OCI-LY7 (cell line): ENCODE measurements at regions of chr1 and their contacts with region 1.

Region 1: DNA sequence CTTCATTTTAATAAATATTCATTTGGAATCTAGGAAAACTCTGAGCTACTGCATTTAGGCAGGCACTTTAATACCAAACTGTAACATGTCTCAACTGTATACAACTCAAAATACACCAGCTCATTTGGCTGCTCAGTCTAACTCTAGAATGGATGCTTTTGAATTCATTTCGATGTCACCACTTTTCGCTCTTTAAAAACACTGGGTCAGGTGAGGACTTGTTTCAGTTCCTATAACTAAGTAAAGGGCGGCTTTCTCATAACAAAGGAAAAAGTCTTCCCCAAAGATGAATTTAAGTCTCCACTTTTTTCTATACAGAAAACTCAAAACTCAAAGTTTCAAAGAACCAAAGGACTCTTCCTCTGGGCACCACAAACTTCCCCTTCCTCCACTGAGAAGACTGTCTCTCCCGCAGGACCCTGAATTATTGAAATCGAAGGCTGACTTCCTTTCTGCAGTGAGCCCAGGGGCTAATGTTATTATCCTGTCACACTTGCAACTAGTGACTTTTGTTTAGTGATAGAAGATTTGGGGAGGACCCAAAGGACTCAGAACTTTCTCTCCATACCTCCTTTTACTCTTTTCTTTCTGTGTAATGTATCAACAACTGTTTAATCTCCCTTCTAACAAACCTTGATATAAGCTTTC is 9.7 kb upstream of the DHX9 start:
- DNase-seq: peak; percentile 72
- H3K4me3 ChIP-seq: peak overlapping the region; percentile 56
- H3K27ac ChIP-seq: peak overlapping the region; percentile 53
- H3K4me1 ChIP-seq: peaks cover 23% of the 10 kb centered on the region
- CTCF ChIP-seq: no peak

Region 2: GRCh38 chr1:182839209-182840065 is 10.0 kb after region 1 on chr1 and contains the start of gene DHX9:
- CTCF ChIA-PET with region 1: no interaction called
- POLR2A ChIA-PET with region 1: interaction called, 14 read pairs
- intact Hi-C with region 1: no loop called
- DNase-seq: peak; percentile 95
- H3K4me3 ChIP-seq: peak within 1 kb of the TSS; percentile 98
- H3K27ac ChIP-seq: peak within 1 kb of the TSS; percentile 87
- H3K4me1 ChIP-seq: peaks cover 35% of the 10 kb centered on the region
- CTCF ChIP-seq: peak; percentile 55
- total RNA-seq, gene DHX9: 217 and 276 TPM in 2 replicates

Region 3: DNA sequence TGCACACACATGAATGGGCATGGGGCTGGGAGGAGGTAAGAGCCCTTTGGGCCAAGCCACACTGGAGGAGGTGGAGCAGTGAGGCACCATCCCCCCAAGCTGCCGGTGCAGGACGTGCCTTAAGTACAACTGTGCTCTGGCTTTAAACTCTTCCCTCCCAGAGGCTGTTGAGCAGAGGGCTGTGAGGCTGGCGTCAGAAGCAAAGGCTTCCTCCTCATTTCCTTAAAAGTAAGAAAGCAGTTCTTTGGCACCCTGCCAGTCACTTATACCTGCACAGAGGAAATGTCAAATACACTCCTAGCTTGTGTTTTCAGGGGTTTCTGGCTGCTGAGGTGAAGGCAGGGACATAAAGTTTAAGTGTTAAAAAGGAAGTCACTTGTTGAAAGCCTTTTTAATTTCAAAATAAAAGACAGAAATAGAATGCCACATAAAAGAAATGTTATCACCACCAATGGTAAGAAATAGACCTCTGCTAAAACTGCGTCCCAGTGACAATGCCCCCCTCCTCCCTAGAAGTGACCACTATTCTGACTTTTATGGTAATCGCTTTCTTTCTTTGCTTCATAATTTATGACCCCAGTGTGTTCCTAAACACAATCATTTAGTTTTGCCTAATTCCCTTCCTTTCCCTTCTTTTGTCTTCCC is 389.7 kb after region 1 on chr1:
- CTCF ChIA-PET with region 1: no interaction called
- POLR2A ChIA-PET with region 1: no interaction called
- intact Hi-C with region 1: no loop called
- DNase-seq: peak; percentile 61
- H3K4me3 ChIP-seq: no peak overlapping the region
- H3K27ac ChIP-seq: no peak overlapping the region
- H3K4me1 ChIP-seq: peaks cover 5% of the 10 kb centered on the region
- CTCF ChIP-seq: no peak